Esophagus muscularis mucosa (tissue), 4 donors: ENCODE measurements at regions of chr15 and their contacts with region 1.

Region 1: GRCh38 chr15:99578809-99579208 is 13.0 kb downstream of the MEF2A start:
- DNase-seq: no peak
- H3K4me3 ChIP-seq: no peak overlapping the region
- H3K27ac ChIP-seq: no peak overlapping the region
- H3K4me1 ChIP-seq: peaks cover 49 to 96% (median 88%) of the 10 kb centered on the region in 4 donors
- H3K27me3 ChIP-seq: no peaks in the 10 kb centered on the region
- CTCF ChIP-seq: no peak
- EP300 ChIP-seq: no peak
- POLR2A ChIP-seq: no peak

Region 2: GRCh38 chr15:99682455-99682854 is 103.6 kb after region 1 on chr15:
- intact Hi-C with region 1: loop called (anchors 10 kb)
- DNase-seq: no peak
- H3K4me3 ChIP-seq: no peak overlapping the region
- H3K27ac ChIP-seq: peak overlapping the region; percentile 3 to 58 (median 37)
- H3K4me1 ChIP-seq: peaks cover 3 to 21% (median 17%) of the 10 kb centered on the region in 4 donors
- H3K27me3 ChIP-seq: no peaks in the 10 kb centered on the region
- CTCF ChIP-seq: no peak
- EP300 ChIP-seq: no peak
- POLR2A ChIP-seq: no peak